HepG2 (cell line): ENCODE measurements at regions of chr19 and their contacts with region 1.

Region 1: GRCh38 chr19:13033819-13034611 is 38.7 kb downstream of the NFIX start:
- DNase-seq: peak; percentile 55
- ATAC-seq: peak; percentile 81
- H3K4me3 ChIP-seq: no peak overlapping the region
- H3K27ac ChIP-seq: no peak overlapping the region
- H3K4me1 ChIP-seq: peaks cover 79% of the 10 kb centered on the region
- H3K27me3 ChIP-seq: no peaks in the 10 kb centered on the region
- CTCF ChIP-seq: peak; percentile 78
- EP300 ChIP-seq: no peak
- POLR2A ChIP-seq: no peak
- RAD21 ChIP-seq: peak; percentile 82

Region 2: DNA sequence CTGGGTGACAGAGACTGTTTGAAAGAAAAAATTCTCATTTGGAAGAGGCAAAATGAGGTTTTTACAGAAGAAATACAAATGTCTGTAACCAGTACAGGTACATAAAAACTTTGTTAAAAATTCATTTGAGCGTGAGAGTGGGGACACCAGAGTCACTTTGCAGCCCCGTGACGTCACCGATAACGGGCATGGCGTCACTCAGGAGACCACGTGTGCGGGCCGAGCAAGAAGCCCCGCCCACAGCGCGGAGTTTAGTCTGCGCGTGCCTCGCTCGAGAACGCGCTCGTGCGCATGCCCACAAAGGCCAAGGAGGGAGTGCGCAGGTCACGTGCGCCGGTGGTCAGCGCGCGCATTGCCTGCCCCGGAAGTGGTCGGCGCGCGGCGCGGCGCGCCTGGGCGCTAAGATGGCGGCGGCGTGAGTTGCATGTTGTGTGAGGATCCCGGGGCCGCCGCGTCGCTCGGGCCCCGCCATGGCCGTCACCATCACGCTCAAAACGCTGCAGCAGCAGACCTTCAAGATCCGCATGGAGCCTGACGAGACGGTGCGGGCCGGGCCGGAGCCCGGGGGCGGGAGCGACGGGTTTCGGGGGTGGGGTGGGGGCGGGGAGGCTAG is 88.4 kb before region 1 on chr19 and contains the start of gene RAD23A:
- CTCF ChIA-PET with region 1: no interaction called
- POLR2A ChIA-PET with region 1: no interaction called
- in situ Hi-C with region 1: no loop called
- intact Hi-C with region 1: no loop called
- DNase-seq: peak; percentile 93
- ATAC-seq: peak; percentile 79
- H3K4me3 ChIP-seq: peak within 1 kb of the TSS; percentile 82 to 89 (median 84)
- H3K27ac ChIP-seq: peak within 1 kb of the TSS; percentile 91
- H3K4me1 ChIP-seq: peaks cover 41% of the 10 kb centered on the region
- H3K27me3 ChIP-seq: no peaks in the 10 kb centered on the region; a peak in 1 of 5 replicates
- CTCF ChIP-seq: 0 out of 2 replicates have a peak, but pooled peaks have one; percentile 6
- EP300 ChIP-seq: no peak
- POLR2A ChIP-seq: peak; percentile 78 to 90
- RAD21 ChIP-seq: peak; percentile 61
- total RNA-seq, gene RAD23A: 34.6 and 42.5 TPM in 2 replicates

Region 3: DNA sequence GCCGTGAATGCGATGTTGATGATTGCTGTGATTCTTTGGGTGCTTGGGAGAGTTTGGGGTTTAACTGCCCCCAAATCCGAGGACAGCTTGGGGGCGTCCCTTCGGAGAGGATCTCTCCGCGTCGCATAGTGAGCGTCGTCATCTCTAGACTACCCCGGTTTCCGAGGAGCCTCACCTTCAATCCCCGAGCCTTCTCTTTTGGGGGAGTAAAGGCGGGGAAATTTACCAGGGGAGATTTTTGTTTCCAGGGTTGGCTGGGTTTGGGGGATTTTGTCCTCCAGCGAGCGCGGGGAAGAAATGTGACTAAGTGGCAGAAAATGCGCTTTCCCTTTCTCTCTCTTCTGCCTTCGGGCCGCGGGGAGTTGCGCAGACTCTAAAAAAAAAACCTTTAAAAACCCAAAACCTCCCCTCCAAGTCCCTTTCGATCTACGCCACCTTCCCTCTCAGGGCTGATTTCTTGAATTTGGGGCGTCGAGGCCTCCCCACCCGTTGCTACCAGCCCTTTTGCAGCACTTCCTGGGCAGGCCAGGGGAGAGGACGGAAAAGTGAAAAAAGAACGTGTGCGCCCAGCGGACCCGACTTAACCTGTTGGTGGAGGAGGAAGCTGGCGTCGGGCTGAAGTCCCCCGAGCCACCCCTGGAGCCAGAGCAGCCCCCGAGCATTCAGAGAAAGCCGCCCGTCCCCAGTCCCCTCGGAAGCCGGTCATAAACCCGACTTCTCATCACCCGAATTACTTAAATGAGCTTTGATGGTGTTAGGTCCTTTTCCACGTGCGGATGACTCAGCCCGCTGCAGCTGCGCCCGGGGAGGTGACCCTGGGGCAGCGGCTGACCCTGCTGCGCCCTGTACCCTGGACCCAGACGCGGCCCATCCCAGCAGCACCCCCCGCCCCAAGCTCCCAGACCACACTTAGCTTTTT is 21.1 kb before region 1 on chr19:
- CTCF ChIA-PET with region 1: no interaction called
- POLR2A ChIA-PET with region 1: interaction called, 16 read pairs
- in situ Hi-C with region 1: no loop called
- intact Hi-C with region 1: no loop called
- DNase-seq: peak; percentile 52
- ATAC-seq: peak; percentile 80
- H3K4me3 ChIP-seq: peak overlapping the region in 1 of 3 experiments; percentile 54; a peak in 1 of 6 replicates
- H3K27ac ChIP-seq: peak overlapping the region; percentile 73
- H3K4me1 ChIP-seq: peaks cover 31% of the 10 kb centered on the region
- H3K27me3 ChIP-seq: no peaks in the 10 kb centered on the region
- CTCF ChIP-seq: no peak
- EP300 ChIP-seq: peak in 1 of 2 experiments; percentile 45; a peak in 2 of 4 replicates
- POLR2A ChIP-seq: no peak
- RAD21 ChIP-seq: peak; percentile 44; the same call in 1 of the 2 replicates

Region 4: GRCh38 chr19:13022859-13023636 is 11.0 kb before region 1 on chr19:
- CTCF ChIA-PET with region 1: no interaction called
- POLR2A ChIA-PET with region 1: interaction called, 21 read pairs
- in situ Hi-C with region 1: no loop called
- intact Hi-C with region 1: no loop called
- DNase-seq: peak; percentile 79
- ATAC-seq: peak; percentile 82
- H3K4me3 ChIP-seq: peak overlapping the region; percentile 52 to 71 (median 62)
- H3K27ac ChIP-seq: peak overlapping the region; percentile 73
- H3K4me1 ChIP-seq: peaks cover 83% of the 10 kb centered on the region
- H3K27me3 ChIP-seq: no peaks in the 10 kb centered on the region
- CTCF ChIP-seq: no peak
- EP300 ChIP-seq: no peak
- POLR2A ChIP-seq: no peak
- RAD21 ChIP-seq: no peak

Region 5: DNA sequence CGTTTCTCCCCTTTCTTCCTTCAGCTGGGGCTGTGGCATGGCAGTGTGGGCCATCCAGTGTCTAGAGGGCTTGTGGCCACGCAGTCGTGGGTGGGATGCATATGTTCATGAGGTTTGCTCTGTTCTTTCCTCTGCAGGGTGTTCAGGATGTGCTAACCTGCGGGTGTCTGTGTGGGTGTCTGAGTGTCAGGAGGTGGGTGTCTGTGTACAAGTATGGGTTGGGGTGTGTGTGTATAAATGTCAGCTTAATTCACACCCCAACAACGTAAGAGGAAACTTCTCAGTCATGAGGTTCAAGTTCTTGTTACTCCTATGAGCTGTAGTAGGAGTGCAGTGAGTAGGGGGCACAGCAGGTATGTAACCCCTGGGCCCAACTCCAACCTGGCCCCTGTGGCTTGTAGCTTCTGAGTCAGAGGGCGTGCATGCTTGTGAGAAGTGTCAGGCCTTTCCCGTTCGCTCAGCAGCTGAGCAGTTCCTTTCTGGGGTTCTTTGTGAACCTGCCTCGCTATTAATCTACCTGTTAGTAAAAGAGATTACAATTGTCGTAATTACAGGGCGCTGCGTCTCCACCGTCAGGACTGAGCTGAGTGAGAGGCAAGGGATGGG is 10.3 kb after region 1 on chr19:
- CTCF ChIA-PET with region 1: no interaction called
- POLR2A ChIA-PET with region 1: interaction called, 12 read pairs
- in situ Hi-C with region 1: no loop called
- intact Hi-C with region 1: no loop called
- DNase-seq: no peak
- ATAC-seq: no peak
- H3K4me3 ChIP-seq: no peak overlapping the region
- H3K27ac ChIP-seq: no peak overlapping the region
- H3K4me1 ChIP-seq: peaks cover 29% of the 10 kb centered on the region
- H3K27me3 ChIP-seq: no peaks in the 10 kb centered on the region
- CTCF ChIP-seq: no peak
- EP300 ChIP-seq: no peak
- POLR2A ChIP-seq: no peak
- RAD21 ChIP-seq: no peak

Region 6: DNA sequence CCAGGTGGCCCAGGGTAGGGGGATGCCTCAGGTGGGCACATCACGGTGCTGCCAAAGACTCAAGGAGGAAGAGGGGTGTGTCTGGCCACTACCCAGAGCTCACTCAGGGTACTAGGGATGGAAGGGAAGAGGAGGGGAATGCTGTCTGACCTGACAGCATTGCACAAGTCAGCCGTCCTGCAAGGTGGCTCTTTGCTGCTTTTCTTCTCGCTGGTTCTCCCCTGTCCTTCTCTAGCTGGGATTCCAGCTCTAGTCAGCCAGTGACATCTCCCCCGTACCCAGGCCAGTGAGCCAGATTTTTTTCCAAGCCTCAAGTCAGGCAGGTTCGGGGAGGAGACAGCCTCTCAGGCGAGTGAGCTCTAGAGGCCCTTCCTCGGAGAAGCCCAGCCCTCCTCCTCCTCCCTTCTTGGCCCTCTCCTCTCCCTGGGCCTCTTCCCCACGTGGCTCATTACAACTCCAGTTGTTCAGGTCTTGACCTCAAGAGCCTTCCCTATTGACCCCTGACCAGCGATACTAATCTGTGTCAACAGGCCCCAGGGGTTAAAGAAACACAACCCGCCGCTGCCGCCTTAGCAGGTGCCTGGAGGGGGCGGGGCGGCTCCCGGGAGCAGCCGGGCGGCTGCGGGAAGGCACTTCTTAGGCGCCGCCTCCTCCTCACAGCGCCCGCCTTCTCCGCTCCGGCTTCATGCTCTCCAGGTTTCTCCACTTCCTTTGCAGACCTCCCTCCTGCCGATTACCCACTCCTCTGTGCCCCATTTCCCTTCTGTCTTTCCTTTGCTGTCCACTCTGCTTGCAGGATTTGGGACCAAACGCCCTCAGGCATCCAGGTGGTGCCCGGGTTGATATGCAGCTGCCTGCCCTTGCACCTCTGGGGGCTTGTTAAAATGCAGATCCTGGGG is 17.5 kb after region 1 on chr19:
- CTCF ChIA-PET with region 1: no interaction called
- POLR2A ChIA-PET with region 1: interaction called, 121 read pairs
- in situ Hi-C with region 1: no loop called
- intact Hi-C with region 1: no loop called
- DNase-seq: peak; percentile 54
- ATAC-seq: no peak; the same call in 2 of the 3 replicates
- H3K4me3 ChIP-seq: peak overlapping the region in 1 of 3 experiments; percentile 53; a peak in 1 of 6 replicates
- H3K27ac ChIP-seq: no peak overlapping the region
- H3K4me1 ChIP-seq: peaks cover 65% of the 10 kb centered on the region
- H3K27me3 ChIP-seq: no peaks in the 10 kb centered on the region
- CTCF ChIP-seq: no peak; the same call in 1 of the 2 replicates
- EP300 ChIP-seq: peak in 1 of 2 experiments; percentile 85; a peak in 2 of 4 replicates
- POLR2A ChIP-seq: no peak
- RAD21 ChIP-seq: peak; percentile 19; the same call in 1 of the 2 replicates

Region 7: DNA sequence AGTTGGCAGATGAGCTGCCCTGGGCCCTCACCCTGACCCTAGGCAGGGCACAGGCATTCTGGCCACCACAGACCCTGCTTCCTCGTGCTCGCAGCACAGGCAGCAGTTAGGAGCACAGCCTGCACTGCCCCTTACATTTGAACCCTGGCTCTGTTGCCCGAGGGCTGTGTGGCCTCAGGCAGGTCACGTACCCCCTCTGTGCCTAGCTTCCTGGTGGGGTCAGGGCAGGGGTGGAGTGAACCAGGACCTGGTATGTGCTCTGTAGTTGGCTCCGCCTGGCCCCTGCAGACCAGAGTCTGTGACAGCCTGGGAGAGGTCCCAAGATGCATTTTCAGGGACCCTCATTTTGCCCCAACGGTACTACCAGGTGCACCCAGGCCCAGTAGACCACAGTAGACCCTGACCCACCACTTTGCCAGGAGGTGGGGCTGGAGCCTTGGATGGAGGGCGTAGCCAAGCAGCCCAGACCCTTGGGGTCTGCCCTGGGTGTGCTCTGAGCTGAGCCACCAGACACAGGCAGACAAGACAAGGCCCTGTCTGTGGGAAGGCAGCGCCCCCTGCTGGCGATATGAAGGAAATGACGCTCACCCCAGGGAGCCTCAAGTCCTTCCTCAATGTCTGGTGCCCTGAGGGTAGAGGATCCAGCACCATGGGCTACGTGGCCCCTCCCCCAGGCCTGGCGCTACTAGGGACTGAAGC is 59.5 kb after region 1 on chr19:
- CTCF ChIA-PET with region 1: no interaction called
- POLR2A ChIA-PET with region 1: interaction called, 4 read pairs
- in situ Hi-C with region 1: loop called (anchors 5 kb)
- intact Hi-C with region 1: no loop called
- DNase-seq: peak; percentile 76
- ATAC-seq: peak; percentile 70
- H3K4me3 ChIP-seq: no peak overlapping the region
- H3K27ac ChIP-seq: no peak overlapping the region
- H3K4me1 ChIP-seq: peaks cover 50% of the 10 kb centered on the region
- H3K27me3 ChIP-seq: no peaks in the 10 kb centered on the region
- CTCF ChIP-seq: peak; percentile 98
- EP300 ChIP-seq: no peak
- POLR2A ChIP-seq: 0 out of 4 replicates have a peak, but pooled peaks of 1 of the 2 experiments have one; percentile 11
- RAD21 ChIP-seq: peak; percentile 93

Region 8: GRCh38 chr19:13132471-13133180 is 98.6 kb after region 1 on chr19:
- CTCF ChIA-PET with region 1: no interaction called
- POLR2A ChIA-PET with region 1: no interaction called
- in situ Hi-C with region 1: no loop called
- intact Hi-C with region 1: no loop called
- DNase-seq: no peak
- ATAC-seq: no peak
- H3K4me3 ChIP-seq: no peak overlapping the region
- H3K27ac ChIP-seq: no peak overlapping the region
- H3K4me1 ChIP-seq: peaks cover 34% of the 10 kb centered on the region
- H3K27me3 ChIP-seq: no peaks in the 10 kb centered on the region
- CTCF ChIP-seq: no peak
- EP300 ChIP-seq: no peak
- POLR2A ChIP-seq: no peak
- RAD21 ChIP-seq: no peak

Region 9: DNA sequence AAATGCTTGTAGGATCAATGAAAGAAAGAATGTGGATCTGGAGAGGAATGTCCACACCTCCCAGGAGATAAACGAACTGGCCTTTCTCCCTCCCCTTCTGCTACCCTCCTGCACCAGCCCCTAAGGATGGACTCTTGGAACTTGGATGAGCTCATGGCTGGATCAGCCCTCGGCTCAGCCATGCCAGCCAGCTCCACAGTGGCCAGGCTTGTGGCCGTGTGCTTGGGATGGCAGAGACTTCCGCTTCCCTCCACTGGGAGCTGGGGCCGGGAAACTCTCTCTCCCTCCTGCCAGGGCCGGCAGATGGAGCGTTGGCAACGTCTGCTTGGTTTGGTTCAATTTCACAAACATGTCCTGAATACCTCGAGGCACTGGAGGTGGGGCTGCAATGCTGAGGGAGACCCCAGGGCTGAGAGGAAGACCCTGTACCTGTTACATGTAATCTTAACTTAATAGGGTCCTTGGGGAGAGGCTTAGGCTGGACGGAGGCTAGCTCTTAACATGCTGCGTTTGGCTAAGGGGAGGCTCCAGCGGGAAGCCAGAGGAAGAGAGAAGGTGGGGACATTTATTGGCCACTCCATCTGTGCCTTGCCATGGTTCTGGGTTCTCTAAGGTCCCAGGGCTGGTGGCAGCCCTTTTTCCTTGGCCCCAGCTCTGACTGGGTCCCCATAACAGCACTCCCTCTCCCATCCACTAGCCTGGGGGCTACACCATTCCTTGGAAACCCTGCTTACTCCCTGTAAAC is 268.7 kb after region 1 on chr19:
- CTCF ChIA-PET with region 1: no interaction called
- POLR2A ChIA-PET with region 1: no interaction called
- in situ Hi-C with region 1: no loop called
- intact Hi-C with region 1: no loop called
- DNase-seq: no peak
- ATAC-seq: peak; percentile 63
- H3K4me3 ChIP-seq: no peak overlapping the region
- H3K27ac ChIP-seq: no peak overlapping the region
- H3K4me1 ChIP-seq: no peaks in the 10 kb centered on the region
- H3K27me3 ChIP-seq: peaks cover 2 to 30% of the 10 kb centered on the region in 2 experiments; a peak in 4 of 5 replicates
- CTCF ChIP-seq: no peak
- EP300 ChIP-seq: no peak
- POLR2A ChIP-seq: no peak
- RAD21 ChIP-seq: no peak